Activated T-helper 2 cell treated with anti-CD3 and anti-CD28 coated beads, Interferon-gamma antibody, Interleukin-2, Interleukin-4, amounts not matched to agents 10 μg/mL and 5 μg/mL and 100 μg/mL, durations not matched to agents 14 hours and 24 hours and 36 hours (primary cell): ENCODE measurements at regions of chr18 and their contacts with region 1.

Region 1: DNA sequence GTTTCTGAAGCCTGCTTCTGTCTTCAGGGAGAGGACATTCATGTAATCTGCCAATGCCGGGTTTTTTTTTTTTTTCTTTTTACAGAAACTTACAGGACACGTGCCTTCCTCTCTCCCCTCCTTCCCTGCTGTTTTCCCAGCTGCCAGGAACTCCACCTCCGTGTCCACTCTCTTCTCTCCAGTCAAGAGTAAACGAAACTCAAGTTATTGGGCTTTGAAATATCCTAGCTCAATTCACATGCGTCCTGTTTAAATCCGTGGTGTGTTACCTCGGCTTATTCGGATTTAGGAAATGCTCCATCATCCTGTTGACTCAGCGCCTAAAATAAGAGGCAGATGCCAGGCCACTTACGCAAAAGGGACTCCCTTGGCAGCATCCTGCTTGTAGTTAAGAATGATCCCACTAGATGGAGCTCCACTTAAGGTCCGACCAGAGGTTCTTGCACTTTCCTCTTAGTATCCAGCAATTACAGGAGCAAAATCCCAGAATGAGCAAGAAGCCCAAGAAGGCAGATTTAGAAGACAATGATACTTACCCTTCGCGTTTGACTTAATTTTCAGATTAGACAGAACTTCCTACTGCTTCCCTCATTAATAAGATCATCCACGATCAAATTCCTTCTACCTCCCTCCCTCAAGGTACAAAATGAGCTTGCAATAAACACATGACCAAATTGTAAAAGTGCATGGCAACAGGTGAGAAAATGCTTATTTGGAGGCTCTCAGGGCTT is 97.2 kb upstream of the ZCCHC2 start:
- DNase-seq: peak; percentile 55
- H3K4me3 Mint-ChIP-seq: peak overlapping the region; percentile 44
- H3K27ac Mint-ChIP-seq: peak overlapping the region; percentile 72
- H3K4me1 Mint-ChIP-seq: peaks cover 40% of the 10 kb centered on the region
- H3K27me3 Mint-ChIP-seq: no peaks in the 10 kb centered on the region

Region 2: DNA sequence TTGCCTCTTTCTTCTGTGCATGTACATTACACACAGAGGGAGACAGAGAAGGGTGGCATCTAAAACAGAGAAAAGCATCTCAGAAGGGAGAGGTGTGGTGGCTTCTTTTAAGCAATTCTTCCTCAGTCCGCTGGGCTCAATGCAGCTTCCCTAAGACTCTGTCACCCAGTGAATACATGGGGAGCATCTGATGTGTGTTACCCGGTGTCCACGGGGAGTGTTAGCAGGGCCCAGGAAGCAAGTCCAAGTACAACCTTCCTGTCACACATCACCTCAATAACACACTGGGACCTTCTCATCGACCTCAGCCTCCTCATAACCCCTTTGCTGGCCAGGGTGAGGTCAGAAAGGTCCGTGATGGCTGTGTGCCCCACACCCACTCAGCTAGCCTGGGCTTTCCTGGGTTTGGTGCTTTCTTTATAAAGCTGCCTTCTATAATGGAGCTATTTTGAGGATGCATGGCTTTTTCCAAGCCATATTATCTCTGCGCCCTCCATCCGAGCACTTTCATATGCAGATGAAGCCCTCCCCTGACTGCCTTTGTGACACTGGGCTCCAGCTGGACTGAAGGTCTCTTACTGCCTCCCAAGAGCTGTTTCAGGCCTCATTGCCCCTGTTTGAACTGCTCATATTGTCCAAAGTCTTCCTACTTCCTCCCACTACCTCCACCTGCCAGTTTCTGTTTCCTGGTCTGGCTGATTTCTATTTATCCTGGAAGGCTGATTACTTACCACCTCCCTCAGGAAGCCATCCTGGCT is 79.1 kb before region 1 on chr18:
- intact Hi-C with region 1: loop called (anchors 1 kb)
- DNase-seq: no peak
- H3K4me3 Mint-ChIP-seq: peak overlapping the region; percentile 61
- H3K27ac Mint-ChIP-seq: peak overlapping the region; percentile 90
- H3K4me1 Mint-ChIP-seq: peaks cover 61% of the 10 kb centered on the region
- H3K27me3 Mint-ChIP-seq: no peaks in the 10 kb centered on the region

Region 3: DNA sequence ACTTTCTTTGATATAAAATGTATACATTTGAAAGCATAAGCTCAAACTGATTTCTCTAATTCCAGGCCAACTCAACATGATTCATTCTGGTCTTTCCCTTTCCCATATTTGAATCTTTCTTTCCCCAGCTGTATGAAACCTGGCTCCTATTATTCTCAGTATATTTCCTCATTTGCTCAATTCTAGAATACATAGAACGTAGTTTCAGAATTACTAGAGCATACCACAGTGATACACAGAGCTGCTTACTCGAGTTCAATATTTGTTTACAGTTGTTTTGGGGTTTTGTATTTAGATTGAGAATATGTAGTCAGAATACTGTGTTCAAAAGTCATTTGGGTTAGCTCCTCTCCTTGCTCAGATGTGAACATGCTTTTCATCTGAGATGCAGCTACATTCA is 57.5 kb before region 1 on chr18:
- intact Hi-C with region 1: loop called (anchors 1 kb)
- DNase-seq: no peak
- H3K4me3 Mint-ChIP-seq: no peak overlapping the region
- H3K27ac Mint-ChIP-seq: peak overlapping the region; percentile 57
- H3K4me1 Mint-ChIP-seq: peaks cover 60% of the 10 kb centered on the region
- H3K27me3 Mint-ChIP-seq: no peaks in the 10 kb centered on the region

Region 4: DNA sequence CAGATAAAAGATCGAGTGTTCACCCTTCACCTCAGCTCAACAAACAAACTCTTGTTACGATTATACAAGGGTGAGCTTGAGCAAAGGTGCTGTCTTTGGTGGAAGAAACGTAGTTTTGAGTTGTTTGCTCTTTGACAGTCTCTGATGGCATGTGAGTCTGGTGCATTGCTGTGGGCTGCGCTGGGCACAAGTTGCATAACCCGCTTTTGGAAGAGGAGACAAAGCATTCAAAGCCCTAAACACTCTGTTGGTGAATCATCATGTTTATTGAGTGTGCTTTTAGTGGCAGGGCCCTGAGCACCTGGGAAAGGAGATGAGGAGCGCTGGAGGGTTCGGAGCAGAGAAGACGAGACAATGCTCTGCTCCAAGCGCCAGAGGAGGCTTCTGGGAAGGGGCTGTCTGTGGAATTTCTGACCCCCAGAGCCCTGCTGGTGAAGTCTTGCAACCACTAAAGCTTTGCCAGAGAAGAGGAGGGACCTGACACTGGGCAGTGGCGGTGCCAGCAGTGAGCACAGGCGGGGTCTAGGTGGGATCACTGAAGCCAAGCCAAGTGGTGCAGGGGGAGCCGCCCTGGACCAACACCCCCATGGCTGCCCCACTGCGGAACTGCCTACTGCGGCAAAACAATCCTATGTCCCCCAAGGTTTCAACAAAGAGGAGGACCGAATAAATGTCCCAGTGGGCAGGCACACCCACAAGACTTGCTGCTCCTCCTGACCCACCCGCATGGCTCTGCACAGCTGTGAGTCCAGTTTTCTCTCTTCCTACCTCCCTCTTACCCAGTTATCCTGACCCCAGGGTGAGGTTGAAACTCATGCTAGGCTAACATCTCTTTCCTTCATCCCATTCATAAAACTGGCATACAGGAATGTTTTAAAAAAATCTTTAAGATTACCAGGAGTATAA is 36.5 kb before region 1 on chr18:
- intact Hi-C with region 1: no loop called
- DNase-seq: no peak
- H3K4me3 Mint-ChIP-seq: no peak overlapping the region
- H3K27ac Mint-ChIP-seq: no peak overlapping the region
- H3K4me1 Mint-ChIP-seq: no peaks in the 10 kb centered on the region
- H3K27me3 Mint-ChIP-seq: no peaks in the 10 kb centered on the region

Region 5: DNA sequence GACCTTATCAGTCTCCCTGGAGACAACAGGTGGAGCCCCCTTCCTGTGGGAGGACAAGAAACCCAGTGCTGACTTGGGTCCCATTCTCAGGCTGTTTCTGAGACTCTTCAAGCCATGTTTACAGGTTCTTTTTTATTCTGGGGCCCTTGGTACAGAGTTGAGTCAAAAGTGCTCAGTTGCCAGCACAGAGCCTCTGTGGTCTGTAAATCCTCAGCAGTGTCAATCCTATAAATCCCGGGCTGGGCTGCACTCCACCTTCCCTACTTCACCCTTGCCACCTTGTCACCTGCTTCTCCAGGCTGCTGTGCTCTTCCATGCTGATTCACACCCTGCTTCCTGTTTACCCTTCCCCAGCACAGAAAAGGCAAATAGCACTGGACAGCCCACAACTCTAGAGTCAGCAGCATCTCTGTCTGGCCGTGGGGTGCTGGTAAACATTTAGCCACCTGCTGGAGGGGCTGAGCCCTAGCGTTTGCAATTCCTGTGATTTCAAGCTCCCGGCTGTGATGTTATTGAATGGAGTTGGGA is 25.8 kb before region 1 on chr18:
- intact Hi-C with region 1: loop called (anchors 1 kb)
- DNase-seq: no peak
- H3K4me3 Mint-ChIP-seq: no peak overlapping the region
- H3K27ac Mint-ChIP-seq: peak overlapping the region; percentile 20
- H3K4me1 Mint-ChIP-seq: peaks cover 60% of the 10 kb centered on the region
- H3K27me3 Mint-ChIP-seq: no peaks in the 10 kb centered on the region

Region 6: DNA sequence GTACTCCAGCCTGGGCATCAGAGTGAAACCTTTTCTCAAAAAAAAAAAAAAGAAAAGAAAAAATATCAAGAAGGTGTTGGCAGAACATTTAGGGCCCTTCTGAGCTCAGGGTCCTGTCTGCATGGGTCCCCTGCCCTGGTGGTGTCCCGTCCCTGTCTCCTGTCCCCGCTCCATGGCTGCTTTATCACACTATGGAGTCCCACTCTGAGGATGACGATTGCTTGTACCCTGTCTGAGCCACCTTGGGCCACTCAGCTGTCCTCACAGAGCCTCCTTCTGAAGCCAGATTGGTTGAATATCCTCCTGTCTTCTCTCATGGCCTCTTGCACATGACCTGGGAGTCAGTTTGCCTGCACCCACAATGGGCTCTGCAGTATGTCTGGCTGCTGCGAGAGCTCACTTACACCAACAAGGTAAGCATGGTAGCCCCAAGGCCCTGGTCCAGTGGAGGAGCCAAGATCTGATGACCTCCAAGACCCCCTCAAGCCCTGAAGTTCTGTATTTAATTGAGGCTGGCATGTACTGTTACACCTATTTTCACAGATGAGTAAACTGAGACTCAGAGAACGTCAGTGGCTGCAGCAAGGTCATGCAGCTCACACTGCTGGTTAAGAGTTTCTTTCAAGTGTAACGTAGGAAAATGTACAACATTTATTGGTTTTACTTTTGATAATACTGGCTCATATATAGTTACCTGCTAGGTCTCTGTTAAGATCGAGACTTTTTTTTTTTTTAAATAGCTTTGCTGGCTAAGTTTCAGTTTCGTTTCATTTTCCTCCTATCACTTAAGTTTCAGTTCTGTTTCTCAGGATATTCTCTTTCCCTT is 80.3 kb after region 1 on chr18:
- intact Hi-C with region 1: loop called (anchors 1 kb)
- DNase-seq: peak; percentile 29
- H3K4me3 Mint-ChIP-seq: peak overlapping the region; percentile 73
- H3K27ac Mint-ChIP-seq: peak overlapping the region; percentile 97
- H3K4me1 Mint-ChIP-seq: peaks cover 20% of the 10 kb centered on the region
- H3K27me3 Mint-ChIP-seq: no peaks in the 10 kb centered on the region

Region 7: DNA sequence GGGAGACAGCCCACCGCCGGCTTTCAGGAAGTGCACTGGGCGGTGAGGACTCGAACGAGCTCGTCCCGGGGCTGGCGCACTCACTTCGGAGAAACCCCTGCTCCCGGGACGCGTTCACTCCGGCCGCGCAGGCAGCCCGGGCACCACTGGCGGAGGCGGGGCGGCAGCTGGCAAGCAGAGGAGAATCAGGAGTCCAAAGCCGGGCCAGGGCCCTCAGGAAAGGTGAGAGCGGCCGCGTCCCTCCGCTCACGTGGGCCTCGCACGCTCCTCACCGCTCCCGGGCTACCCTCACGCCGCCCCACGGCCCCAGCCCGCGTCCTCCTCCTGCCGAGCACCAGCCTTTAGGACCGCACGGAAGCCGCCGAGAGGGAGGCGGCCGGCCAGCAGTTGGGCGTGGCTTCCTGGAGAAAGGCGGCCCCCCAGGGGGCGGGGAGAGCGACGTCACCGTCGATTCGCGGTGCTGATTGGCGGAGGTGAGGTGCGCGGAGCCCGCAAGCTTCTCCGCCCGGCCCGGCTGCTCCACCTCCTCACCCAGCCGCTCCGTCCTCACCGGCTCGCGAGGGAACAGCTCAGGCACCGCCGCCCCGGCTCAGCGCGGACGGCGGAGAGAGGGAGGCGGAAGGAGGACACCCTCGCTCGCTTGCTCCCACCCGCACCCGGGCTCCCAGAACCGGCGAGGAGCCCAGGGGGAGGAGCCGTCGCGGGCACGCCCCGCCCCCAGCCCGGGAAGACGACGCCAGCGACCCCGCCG is 97.0 kb after region 1 on chr18 and contains the start of gene ZCCHC2:
- intact Hi-C with region 1: loop called (anchors 1 kb)
- DNase-seq: peak; percentile 99
- H3K4me3 Mint-ChIP-seq: peak within 1 kb of the TSS; percentile 95
- H3K27ac Mint-ChIP-seq: peak within 1 kb of the TSS; percentile 88
- H3K4me1 Mint-ChIP-seq: peaks cover 29% of the 10 kb centered on the region
- H3K27me3 Mint-ChIP-seq: no peaks in the 10 kb centered on the region
- total RNA-seq, gene ZCCHC2: 43.8 and 48.6 TPM in 2 replicates